ENCODE measurements at regions of chr1 and their contacts with region 1.

Region 1: GRCh38 chr1:153842006-153842471 is 66.8 kb downstream of the SLC27A3 start:
- DNase-seq: no peak
- H3K4me3 Mint-ChIP-seq: no peak overlapping the region
- H3K27ac Mint-ChIP-seq: no peak overlapping the region
- H3K4me1 Mint-ChIP-seq: peaks cover 16% of the 10 kb centered on the region
- H3K27me3 Mint-ChIP-seq: no peaks in the 10 kb centered on the region

Region 2: DNA sequence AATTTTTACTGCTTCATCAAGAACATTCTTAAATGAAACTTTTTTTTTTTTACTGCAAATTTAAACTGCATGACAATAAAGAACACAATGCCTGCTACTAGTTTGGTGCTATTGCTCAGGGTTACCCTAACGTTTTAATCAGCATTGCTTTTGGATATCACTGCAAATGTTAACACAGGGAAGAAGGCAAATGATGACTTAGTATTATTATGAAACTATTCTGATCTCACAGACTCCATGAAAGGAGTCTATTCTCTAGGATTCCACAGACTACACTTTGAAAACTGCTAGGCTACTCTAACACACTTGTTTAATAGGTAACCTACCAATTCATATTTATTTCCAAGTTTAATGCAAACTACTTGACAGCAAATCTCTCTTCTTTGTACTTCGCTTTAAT is 30.9 kb after region 1 on chr1:
- intact Hi-C with region 1: loop called (anchors 5 kb)
- DNase-seq: no peak
- H3K4me3 Mint-ChIP-seq: no peak overlapping the region
- H3K27ac Mint-ChIP-seq: no peak overlapping the region
- H3K4me1 Mint-ChIP-seq: peaks cover 6% of the 10 kb centered on the region
- H3K27me3 Mint-ChIP-seq: no peaks in the 10 kb centered on the region

Measured in activated CD4-positive, alpha-beta T cell treated with anti-CD3 and anti-CD28 coated beads, Interleukin-2, amount 10 ng/mL, durations not matched to agents 24 days and 14 days (primary cell).